ENCODE measurements at regions of chr2 and their contacts with region 1.

Region 1: DNA sequence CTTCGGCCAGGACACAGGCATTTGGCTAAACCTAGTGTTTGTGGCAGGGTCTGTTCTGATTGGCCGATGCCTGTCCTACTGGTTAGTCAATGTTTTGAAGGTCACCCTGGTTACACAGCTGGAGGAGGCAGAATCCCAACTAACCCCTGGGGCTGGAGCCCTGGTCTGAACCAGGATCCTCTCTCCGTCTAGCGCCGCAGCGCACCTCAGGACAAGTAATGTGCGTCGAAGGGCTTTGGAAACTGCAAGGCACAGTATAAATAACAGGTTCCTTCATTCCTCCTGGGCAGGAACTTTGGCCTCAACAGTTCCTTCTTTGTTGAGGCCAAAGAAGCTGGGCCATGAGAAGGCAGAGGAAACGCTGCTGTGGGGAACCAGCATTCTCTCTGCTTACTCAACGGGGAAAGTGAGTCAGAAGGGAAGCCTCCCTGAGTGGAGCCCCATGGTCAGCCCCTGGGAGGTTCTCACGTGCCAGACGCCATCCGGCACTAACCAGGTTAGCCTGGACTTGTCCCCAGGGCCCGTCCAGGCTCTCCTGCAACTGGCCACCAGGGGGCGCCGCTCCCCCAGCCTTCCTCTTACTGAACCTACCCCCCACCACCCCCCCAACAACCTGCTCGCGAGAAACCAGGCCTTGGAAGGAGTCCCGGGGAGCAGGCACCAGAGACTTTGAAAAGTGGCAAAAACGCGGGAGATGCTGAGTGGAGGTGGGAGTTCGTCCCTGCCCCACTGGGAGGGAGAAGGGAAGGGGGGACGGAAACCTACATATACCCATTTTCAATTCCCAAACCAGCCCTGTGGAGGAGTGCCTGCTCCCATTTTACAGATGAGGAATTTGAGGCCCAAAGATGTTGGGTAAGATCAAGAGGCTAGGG is 19.8 kb downstream of the TEX44 start:
- DNase-seq: peak in 1 of 2 experiments; percentile 95
- H3K4me3 ChIP-seq: peak overlapping the region in 1 of 4 experiments; percentile 68; a peak in 2 of 8 replicates
- H3K27ac ChIP-seq: peak overlapping the region; percentile 89
- H3K4me1 ChIP-seq: peaks cover 6 to 33% (median 32%) of the 10 kb centered on the region in 4 experiments
- H3K27me3 ChIP-seq: no peaks in the 10 kb centered on the region
- CTCF ChIP-seq: peak in 2 of 3 experiments; percentile 83 to 87; a peak in 3 of 4 replicates
- EP300 ChIP-seq: 0 out of 3 replicates have a peak, but pooled peaks of 1 of the 2 experiments have one; percentile 77
- POLR2A ChIP-seq: peak in 1 of 2 experiments; percentile 64; a peak in 2 of 3 replicates
- RAD21 ChIP-seq: peak; percentile 90 to 95

Region 2: DNA sequence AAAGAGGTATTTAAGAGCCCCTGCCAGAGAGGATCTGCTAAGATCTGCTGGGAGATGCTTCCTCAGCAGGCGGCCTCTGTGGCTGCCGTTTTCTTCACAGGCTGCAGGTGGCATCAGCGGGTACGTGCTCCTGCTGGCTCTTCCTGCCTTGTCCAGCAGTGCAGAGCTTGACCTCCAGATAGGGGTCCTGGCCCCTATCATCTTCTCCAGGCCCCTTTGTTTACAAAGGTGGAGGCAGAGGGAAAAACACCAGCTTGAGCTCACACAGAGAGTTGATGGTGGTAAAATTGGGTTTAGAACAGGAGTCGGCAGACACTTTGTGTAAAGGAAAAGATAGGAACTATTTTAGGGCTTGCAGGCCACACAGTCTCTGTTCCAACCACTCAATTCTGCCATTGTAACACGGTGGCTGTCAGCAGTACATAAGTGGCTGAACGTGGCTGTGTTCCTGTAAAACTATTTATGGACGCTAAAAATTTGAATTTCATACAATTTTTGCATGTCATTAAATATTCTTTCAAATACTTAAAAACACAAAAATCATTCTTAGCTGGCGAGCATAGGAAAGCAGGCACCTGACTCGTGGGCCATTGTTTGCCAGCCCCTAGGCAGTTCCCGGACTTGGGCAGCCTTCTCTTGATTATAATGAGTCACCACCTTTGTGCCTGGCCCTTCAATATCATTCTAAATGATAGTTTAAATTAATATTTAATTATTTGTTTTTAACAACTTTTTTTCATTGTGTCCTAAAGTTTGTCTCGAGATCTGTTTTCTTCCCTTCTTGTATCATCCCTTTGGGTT is 315.1 kb before region 1 on chr2:
- CTCF ChIA-PET with region 1: no interaction called
- POLR2A ChIA-PET with region 1: no interaction called
- DNase-seq: peak; percentile 31 to 77
- H3K4me3 ChIP-seq: no peak overlapping the region
- H3K27ac ChIP-seq: no peak overlapping the region
- H3K4me1 ChIP-seq: peaks cover 0 to 9% (median 3%) of the 10 kb centered on the region in 4 experiments; a peak in 2 of 7 replicates
- H3K27me3 ChIP-seq: no peaks in the 10 kb centered on the region
- CTCF ChIP-seq: peak; percentile 89 to 96 (median 90)
- EP300 ChIP-seq: no peak
- POLR2A ChIP-seq: no peak
- RAD21 ChIP-seq: peak; percentile 84

Region 3: DNA sequence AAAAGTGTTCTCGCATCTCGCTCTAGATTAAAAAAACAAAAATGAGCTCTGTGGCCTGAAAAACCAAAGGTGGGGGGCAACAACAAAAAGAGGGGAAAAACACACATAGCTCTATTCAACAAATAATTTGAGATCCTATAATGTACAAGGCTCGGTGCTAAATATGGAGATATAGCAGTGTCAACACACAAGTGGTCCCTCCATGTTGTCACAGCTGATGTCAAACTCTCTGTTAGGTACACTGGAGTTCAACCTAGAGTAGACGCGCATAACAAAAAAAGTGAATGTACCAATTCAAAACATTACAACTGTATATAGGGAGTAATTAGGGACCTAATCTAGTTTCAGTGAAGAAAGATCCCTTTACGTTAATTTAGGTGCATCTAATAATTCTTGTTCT is 154.0 kb before region 1 on chr2:
- CTCF ChIA-PET with region 1: no interaction called
- POLR2A ChIA-PET with region 1: no interaction called
- DNase-seq: no peak
- H3K4me3 ChIP-seq: no peak overlapping the region
- H3K27ac ChIP-seq: no peak overlapping the region
- H3K4me1 ChIP-seq: peaks cover 2 to 14% (median 4%) of the 10 kb centered on the region in 4 experiments; a peak in 6 of 7 replicates
- H3K27me3 ChIP-seq: no peaks in the 10 kb centered on the region
- CTCF ChIP-seq: no peak
- EP300 ChIP-seq: no peak
- POLR2A ChIP-seq: peak in 1 of 2 experiments; percentile 59; a peak in 1 of 3 replicates
- RAD21 ChIP-seq: no peak

Region 4: GRCh38 chr2:231470246-231470900 is 142.0 kb before region 1 on chr2:
- CTCF ChIA-PET with region 1: no interaction called
- POLR2A ChIA-PET with region 1: no interaction called
- DNase-seq: no peak
- H3K4me3 ChIP-seq: no peak overlapping the region
- H3K27ac ChIP-seq: no peak overlapping the region
- H3K4me1 ChIP-seq: peaks cover 0 to 3% (median 2%) of the 10 kb centered on the region in 4 experiments; a peak in 3 of 7 replicates
- H3K27me3 ChIP-seq: no peaks in the 10 kb centered on the region
- CTCF ChIP-seq: no peak
- EP300 ChIP-seq: no peak
- POLR2A ChIP-seq: no peak
- RAD21 ChIP-seq: no peak

Region 5: DNA sequence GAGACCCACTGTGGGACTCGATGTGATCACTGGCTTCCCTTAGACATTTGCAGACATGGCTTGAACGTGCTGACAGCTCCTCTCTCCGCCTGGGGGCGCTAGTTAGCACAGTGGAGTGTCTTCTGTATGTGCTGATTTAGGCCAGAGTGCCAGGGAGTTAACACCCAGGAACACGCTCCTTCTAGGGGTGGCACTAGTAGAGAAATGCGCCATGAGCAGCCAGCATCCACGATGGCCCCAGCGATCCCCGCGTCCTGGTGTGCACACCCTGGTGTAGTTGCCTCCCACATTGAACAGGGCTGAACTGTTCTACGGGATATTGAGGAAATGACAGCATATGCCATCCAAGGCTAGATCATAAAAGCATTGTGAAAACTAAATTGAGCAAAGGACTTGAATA is 70.8 kb before region 1 on chr2:
- CTCF ChIA-PET with region 1: interaction called, 14 read pairs
- POLR2A ChIA-PET with region 1: interaction called, 4 read pairs
- DNase-seq: peak in 1 of 2 experiments; percentile 90
- H3K4me3 ChIP-seq: no peak overlapping the region
- H3K27ac ChIP-seq: no peak overlapping the region
- H3K4me1 ChIP-seq: 0 out of 7 replicates have a peak, but pooled peaks cover 0 to 2% (median 0%) of the 10 kb centered on the region in 4 experiments
- H3K27me3 ChIP-seq: no peaks in the 10 kb centered on the region
- CTCF ChIP-seq: peak; percentile 93 to 98 (median 93)
- EP300 ChIP-seq: no peak
- POLR2A ChIP-seq: no peak
- RAD21 ChIP-seq: peak; percentile 54 to 70; a peak in 3 of 4 replicates

Region 6: GRCh38 chr2:231627384-231628120 is 15.1 kb after region 1 on chr2:
- CTCF ChIA-PET with region 1: interaction called, 42 read pairs
- POLR2A ChIA-PET with region 1: interaction called, 69 read pairs
- DNase-seq: no peak
- H3K4me3 ChIP-seq: no peak overlapping the region
- H3K27ac ChIP-seq: no peak overlapping the region
- H3K4me1 ChIP-seq: no peaks in the 10 kb centered on the region
- H3K27me3 ChIP-seq: no peaks in the 10 kb centered on the region
- CTCF ChIP-seq: no peak
- EP300 ChIP-seq: no peak
- POLR2A ChIP-seq: no peak
- RAD21 ChIP-seq: no peak

Region 7: DNA sequence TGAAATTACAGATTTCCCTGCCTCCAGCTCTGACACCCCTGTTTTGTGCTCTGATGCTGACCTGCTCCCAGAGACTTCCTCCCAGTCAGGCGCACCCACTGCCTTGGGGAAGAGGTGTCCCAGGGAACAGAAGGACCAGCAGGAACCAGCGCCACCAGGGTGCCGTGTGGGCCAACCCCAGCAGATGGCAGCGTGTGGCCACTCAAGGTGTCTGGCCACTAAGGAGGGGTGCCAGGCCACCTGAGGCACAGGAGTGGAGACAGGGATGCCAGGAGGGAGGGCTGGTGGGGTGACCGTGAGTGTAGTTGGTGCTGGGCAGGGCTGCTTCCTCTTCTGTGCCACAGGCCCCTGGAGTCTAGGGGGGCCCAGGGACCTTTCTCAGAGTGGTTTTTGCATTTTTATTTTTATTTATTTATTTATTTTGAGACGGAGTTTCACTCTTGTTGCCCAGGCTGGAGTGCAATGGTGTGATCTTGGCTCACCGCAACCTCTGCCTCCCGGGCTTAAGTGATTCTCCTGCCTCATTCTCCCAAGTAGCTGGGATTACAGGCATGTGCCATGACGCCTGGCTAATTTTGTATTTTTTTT is 36.3 kb after region 1 on chr2:
- CTCF ChIA-PET with region 1: interaction called, 22 read pairs
- POLR2A ChIA-PET with region 1: interaction called, 15 read pairs
- DNase-seq: peak in 1 of 2 experiments; percentile 88
- H3K4me3 ChIP-seq: no peak overlapping the region
- H3K27ac ChIP-seq: no peak overlapping the region
- H3K4me1 ChIP-seq: peaks cover 2 to 7% (median 3%) of the 10 kb centered on the region in 4 experiments; a peak in 4 of 7 replicates
- H3K27me3 ChIP-seq: no peaks in the 10 kb centered on the region
- CTCF ChIP-seq: peak; percentile 88 to 95 (median 90)
- EP300 ChIP-seq: no peak
- POLR2A ChIP-seq: no peak
- RAD21 ChIP-seq: peak; percentile 87 to 92

Region 8: GRCh38 chr2:231687133-231687852 is 74.9 kb after region 1 on chr2:
- CTCF ChIA-PET with region 1: interaction called, 513 read pairs
- POLR2A ChIA-PET with region 1: interaction called, 48 read pairs
- DNase-seq: peak; percentile 75 to 93
- H3K4me3 ChIP-seq: peak overlapping the region; percentile 16 to 54 (median 32); a peak in 7 of 8 replicates
- H3K27ac ChIP-seq: peak overlapping the region; percentile 46
- H3K4me1 ChIP-seq: peaks cover 4 to 42% (median 21%) of the 10 kb centered on the region in 4 experiments
- H3K27me3 ChIP-seq: no peaks in the 10 kb centered on the region
- CTCF ChIP-seq: peak in 2 of 3 experiments; percentile 79 to 92; a peak in 3 of 4 replicates
- EP300 ChIP-seq: no peak
- POLR2A ChIP-seq: peak in 1 of 2 experiments; percentile 79; a peak in 2 of 3 replicates
- RAD21 ChIP-seq: peak; percentile 61 to 67

Region 9: GRCh38 chr2:231713730-231714430 is 101.5 kb after region 1 on chr2:
- CTCF ChIA-PET with region 1: interaction called, 90 read pairs
- POLR2A ChIA-PET with region 1: interaction called, 141 read pairs
- DNase-seq: peak; percentile 76 to 97
- H3K4me3 ChIP-seq: no peak overlapping the region
- H3K27ac ChIP-seq: peak overlapping the region; percentile 69; the same call in 1 of the 2 replicates
- H3K4me1 ChIP-seq: peaks cover 0 to 28% (median 19%) of the 10 kb centered on the region in 4 experiments; a peak in 6 of 7 replicates
- H3K27me3 ChIP-seq: no peaks in the 10 kb centered on the region
- CTCF ChIP-seq: peak in 2 of 3 experiments; percentile 90 to 91; a peak in 3 of 4 replicates
- EP300 ChIP-seq: no peak; a peak in 1 of 3 replicates
- POLR2A ChIP-seq: peak in 1 of 2 experiments; percentile 99; a peak in 2 of 3 replicates
- RAD21 ChIP-seq: peak; percentile 43 to 59